Transverse colon (tissue), 4 donors: ENCODE measurements at regions of chr1 and their contacts with region 1.

Region 1: GRCh38 chr1:203402629-203403337 is 51.9 kb upstream of the FMOD start:
- DNase-seq: no peak
- H3K4me3 ChIP-seq: no peak overlapping the region
- H3K27ac ChIP-seq: peak overlapping the region; percentile 69 to 78 (median 70)
- H3K4me1 ChIP-seq: peaks cover 15 to 35% (median 22%) of the 10 kb centered on the region in 4 donors
- H3K27me3 ChIP-seq: no peaks in the 10 kb centered on the region
- CTCF ChIP-seq: no peak
- EP300 ChIP-seq: no peak
- POLR2A ChIP-seq: no peak

Region 2: DNA sequence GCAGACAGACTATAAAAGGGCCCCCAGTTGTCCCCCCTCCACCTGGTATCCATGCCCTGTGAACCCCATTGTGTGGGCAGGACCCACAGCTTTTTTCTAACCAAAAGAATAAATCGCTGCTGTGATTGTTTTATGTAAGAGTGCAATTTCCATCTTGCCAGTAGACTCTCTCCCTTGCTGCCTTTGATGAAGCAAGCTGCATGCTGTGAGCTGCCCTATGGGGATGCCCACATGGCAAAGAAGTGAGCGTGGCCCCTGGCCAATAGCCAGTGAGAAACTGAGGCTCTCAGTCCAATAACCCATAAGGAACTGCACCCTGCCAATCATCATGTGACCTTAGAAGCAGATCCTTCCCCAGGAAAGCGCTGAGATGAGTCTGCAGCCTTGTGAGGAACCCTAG is 14.1 kb before region 1 on chr1:
- in situ Hi-C with region 1: no loop called
- intact Hi-C with region 1: loop called (anchors 1 kb)
- DNase-seq: no peak
- H3K4me3 ChIP-seq: no peak overlapping the region
- H3K27ac ChIP-seq: no peak overlapping the region
- H3K4me1 ChIP-seq: no peaks in the 10 kb centered on the region
- H3K27me3 ChIP-seq: no peaks in the 10 kb centered on the region
- CTCF ChIP-seq: no peak
- EP300 ChIP-seq: no peak
- POLR2A ChIP-seq: no peak

Region 3: GRCh38 chr1:203534527-203535230 is 131.9 kb after region 1 on chr1:
- in situ Hi-C with region 1: no loop called
- intact Hi-C with region 1: no loop called
- DNase-seq: peak; percentile 66
- H3K4me3 ChIP-seq: no peak overlapping the region
- H3K27ac ChIP-seq: peak overlapping the region; percentile 58 to 86 (median 77)
- H3K4me1 ChIP-seq: peaks cover 0 to 9% (median 6%) of the 10 kb centered on the region in 4 donors
- H3K27me3 ChIP-seq: no peaks in the 10 kb centered on the region
- CTCF ChIP-seq: no peak
- EP300 ChIP-seq: peak; percentile 84
- POLR2A ChIP-seq: no peak